ENCODE measurements at regions of chr6 and their contacts with region 1.

Region 1: GRCh38 chr6:151390276-151391032 is 905 bp downstream of the ZBTB2 start:
- DNase-seq: peak; percentile 94
- H3K4me3 ChIP-seq: peak overlapping the region; percentile 81 to 91 (median 86)
- H3K27ac ChIP-seq: peak overlapping the region; percentile 92
- H3K4me1 ChIP-seq: peaks cover 0 to 9% (median 4%) of the 10 kb centered on the region in 4 experiments; a peak in 3 of 7 replicates
- H3K27me3 ChIP-seq: no peaks in the 10 kb centered on the region
- CTCF ChIP-seq: no peak
- EP300 ChIP-seq: no peak; a peak in 1 of 3 replicates
- POLR2A ChIP-seq: peak in 1 of 2 experiments; percentile 89; a peak in 1 of 3 replicates
- RAD21 ChIP-seq: no peak

Region 2: GRCh38 chr6:151374036-151374683 is 16.3 kb before region 1 on chr6:
- CTCF ChIA-PET with region 1: interaction called, 4 read pairs
- POLR2A ChIA-PET with region 1: interaction called, 16 read pairs
- DNase-seq: peak in 1 of 2 experiments; percentile 45
- H3K4me3 ChIP-seq: no peak overlapping the region
- H3K27ac ChIP-seq: no peak overlapping the region
- H3K4me1 ChIP-seq: peaks cover 0 to 9% (median 4%) of the 10 kb centered on the region in 4 experiments; a peak in 3 of 7 replicates
- H3K27me3 ChIP-seq: no peaks in the 10 kb centered on the region
- CTCF ChIP-seq: no peak
- EP300 ChIP-seq: no peak
- POLR2A ChIP-seq: no peak
- RAD21 ChIP-seq: no peak

Region 3: DNA sequence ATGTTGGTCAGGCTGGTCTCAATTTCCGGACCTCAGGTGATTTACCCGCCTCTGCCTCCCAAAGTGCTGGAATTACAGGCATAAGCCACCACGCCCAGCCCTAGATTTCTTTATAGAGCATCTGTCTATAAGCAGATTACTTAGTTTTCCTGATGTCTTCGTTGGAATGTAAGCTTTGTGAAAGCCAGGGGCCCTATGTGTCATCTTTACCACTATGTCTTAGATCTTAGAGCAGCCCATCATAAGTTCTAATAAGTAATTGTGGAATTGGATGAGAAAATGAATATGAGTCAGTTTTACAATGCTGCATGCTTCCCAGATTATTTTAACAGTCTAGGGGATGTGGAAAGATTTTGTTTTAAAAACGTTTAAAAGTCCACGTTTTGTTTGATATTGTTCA is 10.0 kb after region 1 on chr6:
- CTCF ChIA-PET with region 1: interaction called, 48 read pairs
- POLR2A ChIA-PET with region 1: interaction called, 60 read pairs
- DNase-seq: no peak
- H3K4me3 ChIP-seq: no peak overlapping the region
- H3K27ac ChIP-seq: no peak overlapping the region
- H3K4me1 ChIP-seq: no peaks in the 10 kb centered on the region
- H3K27me3 ChIP-seq: no peaks in the 10 kb centered on the region
- CTCF ChIP-seq: no peak
- EP300 ChIP-seq: no peak
- POLR2A ChIP-seq: no peak
- RAD21 ChIP-seq: no peak

Region 4: GRCh38 chr6:151409260-151409659 is 18.8 kb after region 1 on chr6:
- CTCF ChIA-PET with region 1: interaction called, 48 read pairs
- POLR2A ChIA-PET with region 1: interaction called, 60 read pairs
- DNase-seq: no peak
- H3K4me3 ChIP-seq: no peak overlapping the region
- H3K27ac ChIP-seq: no peak overlapping the region
- H3K4me1 ChIP-seq: no peaks in the 10 kb centered on the region
- H3K27me3 ChIP-seq: no peaks in the 10 kb centered on the region
- CTCF ChIP-seq: no peak
- EP300 ChIP-seq: no peak
- POLR2A ChIP-seq: no peak
- RAD21 ChIP-seq: no peak